ENCODE measurements at regions of chr15 and their contacts with region 1.

Region 1: GRCh38 chr15:31116423-31117030 is 15.0 kb upstream of the TRPM1 start:
- DNase-seq: no peak
- CTCF ChIP-seq: no peak

Region 2: GRCh38 chr15:31101262-31102038 is 15.1 kb before region 1 on chr15 and contains the start of gene TRPM1:
- CTCF ChIA-PET with region 1: interaction called, 3 read pairs
- POLR2A ChIA-PET with region 1: interaction called, 12 read pairs
- DNase-seq: no peak
- CTCF ChIP-seq: no peak

Measured in GM10248 (cell line).